ENCODE measurements at regions of chrX and their contacts with region 1.

Region 1: DNA sequence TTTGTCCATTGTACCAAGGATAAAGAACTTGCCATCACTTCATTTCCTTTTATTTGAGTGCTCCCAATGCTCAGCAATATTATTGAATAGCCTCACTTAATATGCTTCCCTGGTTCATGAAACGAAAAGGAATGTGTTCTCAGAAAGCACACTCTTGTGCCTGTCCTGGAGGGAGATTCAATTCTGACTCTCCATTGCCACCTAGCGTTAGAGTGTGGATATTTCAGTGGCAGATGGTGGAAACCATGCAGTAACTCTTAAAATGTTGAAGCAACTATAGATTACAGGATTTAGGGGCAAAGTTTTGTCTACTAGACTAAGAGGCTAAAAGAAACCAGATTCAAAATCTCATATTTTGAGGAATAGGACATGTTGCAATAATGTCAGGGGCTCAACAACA is 36.0 kb downstream of the GAB3 start:
- DNase-seq: peak; percentile 56 to 61 (median 57)
- H3K4me3 ChIP-seq: no peak overlapping the region
- H3K4me3 Mint-ChIP-seq: peak overlapping the region in 1 of 8 donors; percentile 32
- H3K27ac ChIP-seq: no peak overlapping the region
- H3K27ac Mint-ChIP-seq: peak overlapping the region in 4 of 7 donors; percentile 3 to 82 (median 42)
- H3K4me1 ChIP-seq: peaks cover 81% of the 10 kb centered on the region
- H3K4me1 Mint-ChIP-seq: peaks cover 46 to 70% (median 61%) of the 10 kb centered on the region in 4 donors
- H3K27me3 ChIP-seq: no peaks in the 10 kb centered on the region
- H3K27me3 Mint-ChIP-seq: no peaks in the 10 kb centered on the region

Region 2: GRCh38 chrX:154443992-154444754 is 270.8 kb before region 1 on chrX and contains the start of gene FAM50A:
- CTCF ChIA-PET with region 1: no interaction called
- POLR2A ChIA-PET with region 1: no interaction called
- intact Hi-C with region 1: no loop called
- DNase-seq: peak; percentile 59 to 67 (median 62)
- H3K4me3 ChIP-seq: peak within 1 kb of the TSS; percentile 3 to 45
- H3K4me3 Mint-ChIP-seq: peak within 1 kb of the TSS; percentile 63 to 86 (median 77)
- H3K27ac ChIP-seq: peak within 1 kb of the TSS; percentile 69
- H3K27ac Mint-ChIP-seq: peak within 1 kb of the TSS; percentile 81 to 95 (median 89)
- H3K4me1 ChIP-seq: peaks cover 49% of the 10 kb centered on the region
- H3K4me1 Mint-ChIP-seq: peaks cover 7 to 51% (median 23%) of the 10 kb centered on the region in 4 donors
- H3K27me3 ChIP-seq: no peaks in the 10 kb centered on the region
- H3K27me3 Mint-ChIP-seq: no peaks in the 10 kb centered on the region
- total RNA-seq, gene FAM50A: 65.2 to 70.3 TPM

Region 3: DNA sequence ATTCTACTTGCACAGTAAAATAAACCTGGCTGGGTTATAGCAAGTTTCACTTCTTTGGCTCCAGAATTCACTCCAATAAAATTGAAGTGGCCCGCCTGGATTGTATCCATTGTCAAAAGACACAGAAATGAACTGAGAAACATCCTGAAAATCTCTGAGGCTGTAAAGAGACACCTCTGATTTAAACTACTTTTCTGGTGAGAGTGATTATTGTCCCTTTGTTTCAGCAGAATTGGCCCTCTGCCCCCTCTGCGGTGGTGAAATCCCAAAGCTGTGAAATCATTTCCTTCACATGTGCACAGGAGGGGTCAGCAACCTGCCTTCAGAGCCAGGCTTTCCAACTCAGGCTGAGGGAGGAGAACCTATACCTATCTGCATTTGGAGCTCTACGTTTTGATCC is 12.9 kb after region 1 on chrX:
- CTCF ChIA-PET with region 1: interaction called, 29 read pairs
- POLR2A ChIA-PET with region 1: interaction called, 49 read pairs
- intact Hi-C with region 1: no loop called
- DNase-seq: no peak
- H3K4me3 ChIP-seq: no peak overlapping the region
- H3K4me3 Mint-ChIP-seq: no peak overlapping the region
- H3K27ac ChIP-seq: no peak overlapping the region
- H3K27ac Mint-ChIP-seq: peak overlapping the region in 1 of 7 donors; percentile 50
- H3K4me1 ChIP-seq: peaks cover 81% of the 10 kb centered on the region
- H3K4me1 Mint-ChIP-seq: peaks cover 52 to 86% (median 76%) of the 10 kb centered on the region in 4 donors
- H3K27me3 ChIP-seq: no peaks in the 10 kb centered on the region
- H3K27me3 Mint-ChIP-seq: no peaks in the 10 kb centered on the region

Region 4: DNA sequence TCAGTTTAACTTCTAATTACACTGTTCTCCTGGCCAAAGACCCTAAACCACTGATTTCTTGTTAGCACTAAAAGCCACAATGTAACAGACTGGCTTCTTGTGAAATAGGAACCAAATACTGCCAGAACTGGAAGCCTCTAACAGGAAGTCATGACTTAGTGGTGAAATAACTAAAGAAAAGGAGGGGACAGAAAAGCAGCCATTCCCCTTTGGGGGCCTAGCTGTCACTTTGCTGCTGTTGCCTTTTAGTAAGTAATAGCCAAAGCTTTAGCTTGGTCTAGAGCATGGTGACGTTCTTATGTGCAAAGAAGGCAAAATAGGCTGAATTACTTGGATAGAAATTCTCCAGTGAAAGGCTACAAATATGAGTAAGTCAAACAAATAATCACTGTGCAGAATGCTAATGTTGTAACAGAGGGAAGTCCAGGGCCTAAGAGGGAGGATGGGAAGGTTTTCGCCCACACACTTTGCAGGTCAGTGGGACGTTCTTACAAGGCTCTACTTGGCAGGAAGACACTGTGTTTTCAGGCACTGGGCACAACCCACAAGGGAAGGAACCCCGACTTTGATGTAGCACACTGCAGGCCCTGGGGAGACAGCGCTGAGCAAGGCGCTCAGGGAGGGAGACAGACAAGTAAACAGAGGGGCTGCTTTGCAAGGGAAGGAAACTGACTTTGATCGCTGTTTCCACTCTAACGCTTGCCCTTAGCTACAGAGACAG is 19.3 kb after region 1 on chrX:
- CTCF ChIA-PET with region 1: interaction called, 29 read pairs
- POLR2A ChIA-PET with region 1: interaction called, 49 read pairs
- intact Hi-C with region 1: loop called (anchors 1 kb)
- DNase-seq: peak in 3 of 5 donors; percentile 24 to 66 (median 32)
- H3K4me3 ChIP-seq: peak overlapping the region in 1 of 2 donors; percentile 20
- H3K4me3 Mint-ChIP-seq: peak overlapping the region; percentile 50 to 85 (median 68)
- H3K27ac ChIP-seq: peak overlapping the region; percentile 64
- H3K27ac Mint-ChIP-seq: peak overlapping the region; percentile 87 to 93 (median 90)
- H3K4me1 ChIP-seq: peaks cover 98% of the 10 kb centered on the region
- H3K4me1 Mint-ChIP-seq: peaks cover 63 to 96% (median 76%) of the 10 kb centered on the region in 4 donors
- H3K27me3 ChIP-seq: no peaks in the 10 kb centered on the region
- H3K27me3 Mint-ChIP-seq: no peaks in the 10 kb centered on the region

Region 5: DNA sequence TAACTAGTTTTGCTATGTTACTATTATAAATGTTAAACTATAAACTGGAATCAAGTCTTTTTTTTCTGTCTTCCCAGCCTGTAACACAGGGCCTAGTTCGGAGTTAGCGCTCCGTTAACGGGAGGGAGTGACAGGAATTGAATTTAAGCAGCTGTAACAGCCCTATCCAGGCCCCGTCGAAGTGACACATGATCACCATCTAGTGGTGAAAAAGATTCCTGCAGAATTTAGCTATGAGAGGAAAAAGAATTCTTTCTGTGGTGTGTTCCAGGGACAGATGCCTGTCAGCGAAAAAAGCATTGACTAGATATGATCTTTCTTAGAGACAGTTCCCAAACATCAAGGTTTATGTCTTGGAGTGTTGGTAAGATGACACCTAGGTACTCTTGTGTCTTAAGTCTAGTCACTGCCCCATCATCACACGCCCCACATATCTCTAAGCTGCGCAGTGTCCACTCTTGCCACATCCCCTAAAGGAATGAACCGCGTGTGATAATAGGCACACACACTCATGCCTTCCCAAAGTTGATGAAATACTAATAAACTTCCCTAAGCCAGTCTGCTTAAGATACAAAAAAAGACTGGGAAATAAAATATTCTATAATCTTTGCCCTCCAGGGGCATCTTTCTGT is 33.9 kb after region 1 on chrX:
- CTCF ChIA-PET with region 1: interaction called, 78 read pairs
- POLR2A ChIA-PET with region 1: interaction called, 51 read pairs
- intact Hi-C with region 1: loop called (anchors 1 kb)
- DNase-seq: peak; percentile 62 to 75 (median 71)
- H3K4me3 ChIP-seq: no peak overlapping the region
- H3K4me3 Mint-ChIP-seq: peak overlapping the region; percentile 26 to 86 (median 77)
- H3K27ac ChIP-seq: peak overlapping the region; percentile 26
- H3K27ac Mint-ChIP-seq: peak overlapping the region in 6 of 7 donors; percentile 69 to 84 (median 78)
- H3K4me1 ChIP-seq: peaks cover 39% of the 10 kb centered on the region
- H3K4me1 Mint-ChIP-seq: peaks cover 18 to 37% (median 25%) of the 10 kb centered on the region in 4 donors
- H3K27me3 ChIP-seq: no peaks in the 10 kb centered on the region
- H3K27me3 Mint-ChIP-seq: no peaks in the 10 kb centered on the region

Region 6: GRCh38 chrX:154762523-154763289 is 47.8 kb after region 1 on chrX and contains the start of gene DKC1:
- CTCF ChIA-PET with region 1: no interaction called
- POLR2A ChIA-PET with region 1: interaction called, 15 read pairs
- intact Hi-C with region 1: no loop called
- DNase-seq: peak; percentile 91 to 96 (median 95)
- H3K4me3 ChIP-seq: peak within 1 kb of the TSS; percentile 60 to 61
- H3K4me3 Mint-ChIP-seq: peak within 1 kb of the TSS; percentile 84 to 93 (median 88)
- H3K27ac ChIP-seq: peak within 1 kb of the TSS; percentile 71
- H3K27ac Mint-ChIP-seq: peak within 1 kb of the TSS; percentile 90 to 96 (median 94)
- H3K4me1 ChIP-seq: peaks cover 18% of the 10 kb centered on the region
- H3K4me1 Mint-ChIP-seq: peaks cover 10 to 25% (median 18%) of the 10 kb centered on the region in 4 donors
- H3K27me3 ChIP-seq: no peaks in the 10 kb centered on the region
- H3K27me3 Mint-ChIP-seq: no peaks in the 10 kb centered on the region
- total RNA-seq, gene DKC1: 60.0 to 63.9 TPM

Region 7: GRCh38 chrX:154840856-154841255 is 125.9 kb after region 1 on chrX:
- CTCF ChIA-PET with region 1: no interaction called
- POLR2A ChIA-PET with region 1: no interaction called
- intact Hi-C with region 1: loop called (anchors 2 kb)
- DNase-seq: peak in 4 of 5 donors; percentile 35 to 43 (median 36)
- H3K4me3 ChIP-seq: no peak overlapping the region
- H3K4me3 Mint-ChIP-seq: no peak overlapping the region
- H3K27ac ChIP-seq: no peak overlapping the region
- H3K27ac Mint-ChIP-seq: no peak overlapping the region
- H3K4me1 ChIP-seq: no peaks in the 10 kb centered on the region
- H3K4me1 Mint-ChIP-seq: peaks cover 0 to 1% (median 0%) of the 10 kb centered on the region in 4 donors
- H3K27me3 ChIP-seq: no peaks in the 10 kb centered on the region
- H3K27me3 Mint-ChIP-seq: no peaks in the 10 kb centered on the region

Region 8: GRCh38 chrX:154980330-154981096 is 265.6 kb after region 1 on chrX:
- CTCF ChIA-PET with region 1: no interaction called
- POLR2A ChIA-PET with region 1: no interaction called
- intact Hi-C with region 1: no loop called
- DNase-seq: peak; percentile 73 to 78 (median 77)
- H3K4me3 ChIP-seq: peak overlapping the region in 1 of 2 donors; percentile 23
- H3K4me3 Mint-ChIP-seq: peak overlapping the region; percentile 83 to 91 (median 88)
- H3K27ac ChIP-seq: peak overlapping the region; percentile 17
- H3K27ac Mint-ChIP-seq: peak overlapping the region; percentile 50 to 95 (median 88)
- H3K4me1 ChIP-seq: peaks cover 7% of the 10 kb centered on the region
- H3K4me1 Mint-ChIP-seq: peaks cover 0 to 9% (median 6%) of the 10 kb centered on the region in 4 donors
- H3K27me3 ChIP-seq: no peaks in the 10 kb centered on the region
- H3K27me3 Mint-ChIP-seq: no peaks in the 10 kb centered on the region